Posterior cingulate gyrus (tissue), 11 donors: ENCODE measurements at regions of chr9 and their contacts with region 1.

Region 1: DNA sequence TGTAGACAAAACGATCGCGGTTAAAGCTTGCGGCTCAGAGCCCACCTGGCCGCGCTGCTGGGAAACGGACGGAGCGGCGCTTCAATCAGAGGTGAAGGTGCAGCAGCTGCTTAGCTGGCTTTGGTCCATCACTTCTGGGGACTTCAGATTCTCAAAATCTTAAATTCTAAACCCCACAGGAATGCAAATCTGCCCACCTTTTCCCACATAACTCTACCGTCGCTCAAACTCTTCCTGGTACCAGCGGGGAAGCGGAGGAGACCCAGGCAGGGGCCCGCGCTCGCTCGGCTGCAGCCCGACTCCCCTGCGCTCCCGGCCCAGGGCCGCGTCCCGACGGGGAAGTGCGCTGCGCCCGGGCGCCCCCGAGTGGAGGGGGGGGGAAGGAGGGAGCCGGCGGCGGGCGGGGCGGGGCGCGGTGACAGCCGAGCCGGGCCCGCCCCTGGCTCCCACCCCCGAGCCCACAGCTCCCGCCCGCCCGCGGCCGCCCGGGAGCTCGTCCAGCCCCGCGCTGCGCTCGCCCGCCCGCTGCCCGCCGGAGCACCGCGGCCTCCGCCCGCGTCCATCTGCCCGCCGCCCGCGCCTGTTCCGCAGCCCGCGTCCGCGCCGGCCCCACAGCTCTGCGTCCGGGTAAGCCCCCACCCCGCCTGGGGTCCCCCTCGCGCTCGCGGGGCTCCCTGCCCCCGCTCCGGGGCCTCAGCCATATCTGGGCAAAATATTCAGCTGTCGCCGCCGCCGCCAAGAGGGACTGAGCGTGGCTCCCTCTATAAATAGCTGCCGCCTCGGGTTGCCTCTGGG is at the start of gene TMOD1:
- DNase-seq: peak; percentile 52 to 95 (median 68)

Region 2: DNA sequence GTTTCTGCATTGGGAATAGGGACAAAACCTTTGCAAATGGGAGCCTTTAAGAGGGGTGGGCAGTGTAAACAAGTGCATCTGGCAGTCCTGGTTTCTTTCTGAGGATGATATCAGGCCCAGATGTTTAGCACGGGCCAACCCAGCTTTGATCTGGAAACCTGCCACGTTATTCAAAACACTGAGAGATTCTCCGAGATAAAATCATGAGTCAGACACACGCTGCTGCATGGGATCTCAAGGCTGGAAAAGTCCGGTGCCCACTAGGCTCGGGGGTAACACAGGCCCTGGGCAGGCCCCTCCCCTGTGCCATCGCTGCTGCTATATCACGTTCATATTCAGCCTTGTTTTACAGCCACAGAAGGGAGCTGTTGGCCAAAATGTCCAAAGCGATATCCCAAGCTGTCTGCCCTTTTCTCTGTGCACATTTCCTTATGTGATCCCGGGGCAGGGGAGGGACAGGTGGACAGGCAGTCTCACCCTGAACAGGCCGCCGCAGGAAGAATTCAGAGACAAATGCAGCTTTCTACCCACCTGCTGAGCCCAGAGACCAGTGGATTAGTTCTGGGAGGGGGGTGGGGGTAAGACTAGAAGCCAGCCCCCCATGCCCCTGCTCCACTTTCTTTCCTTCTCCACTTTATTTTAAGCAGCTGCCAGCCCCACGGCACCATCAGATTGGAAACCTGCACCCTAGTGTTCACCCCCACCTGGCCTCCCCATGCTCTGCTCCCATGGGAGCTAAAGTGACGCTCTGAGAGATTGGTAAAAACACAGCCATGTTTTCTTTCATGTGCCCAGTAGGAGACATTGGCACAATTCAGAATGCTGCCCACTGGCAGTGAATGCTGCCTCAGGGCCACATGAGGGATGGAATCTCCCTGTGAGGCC is 63.2 kb after region 1 on chr9:
- intact Hi-C with region 1: loop called (anchors 5 kb)
- DNase-seq: peak in 3 of 10 donors; percentile 33 to 90 (median 46)